GM12878 (cell line): ENCODE measurements at regions of chr6 and their contacts with region 1.

Region 1: GRCh38 chr6:113642714-113643406 is 214.3 kb upstream of the MARCKS start:
- DNase-seq: no peak
- ATAC-seq: peak; percentile 81
- H3K4me3 ChIP-seq: peak overlapping the region; percentile 28; the same call in 1 of the 2 replicates
- H3K27ac ChIP-seq: peak overlapping the region; percentile 89
- H3K4me1 ChIP-seq: peaks cover 39% of the 10 kb centered on the region
- H3K27me3 ChIP-seq: no peaks in the 10 kb centered on the region
- CTCF ChIP-seq: no peak
- EP300 ChIP-seq: peak; percentile 83 to 88; a peak in 3 of 4 replicates
- POLR2A ChIP-seq: 0 out of 2 replicates have a peak, but pooled peaks have one; percentile 43
- RAD21 ChIP-seq: peak; percentile 25; the same call in 1 of the 2 replicates

Region 2: GRCh38 chr6:113584767-113585166 is 58.1 kb before region 1 on chr6:
- CTCF ChIA-PET with region 1: no interaction called
- POLR2A ChIA-PET with region 1: no interaction called
- RAD21 ChIA-PET with region 1: no interaction called
- SMC1A ChIA-PET with region 1: no interaction called
- in situ Hi-C with region 1: no loop called
- intact Hi-C with region 1: no loop called
- DNase-seq: no peak
- ATAC-seq: no peak
- H3K4me3 ChIP-seq: no peak overlapping the region
- H3K27ac ChIP-seq: no peak overlapping the region
- H3K4me1 ChIP-seq: no peaks in the 10 kb centered on the region
- H3K27me3 ChIP-seq: no peaks in the 10 kb centered on the region
- CTCF ChIP-seq: no peak
- EP300 ChIP-seq: no peak
- POLR2A ChIP-seq: no peak
- RAD21 ChIP-seq: no peak

Region 3: DNA sequence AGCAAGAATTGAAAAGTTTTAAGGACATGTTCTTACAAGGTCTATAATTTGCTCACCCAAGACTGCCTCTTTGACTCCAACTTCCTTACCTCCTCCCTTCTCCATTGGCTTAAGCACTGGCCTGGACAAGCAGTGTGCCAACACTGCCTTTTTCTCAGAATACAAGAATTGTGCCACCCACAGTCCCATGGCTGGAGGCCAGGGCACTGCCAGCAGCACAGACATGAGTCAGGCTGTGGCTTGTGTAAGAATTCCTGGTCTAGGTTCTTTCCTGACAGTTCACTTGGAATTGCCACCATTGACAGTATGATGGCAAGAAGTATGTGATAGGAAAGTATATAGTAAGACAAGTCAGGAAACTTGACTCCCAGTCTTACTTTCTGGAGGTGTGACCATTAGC is 11.5 kb after region 1 on chr6:
- CTCF ChIA-PET with region 1: interaction called, 9 read pairs
- POLR2A ChIA-PET with region 1: interaction called, 304 read pairs
- RAD21 ChIA-PET with region 1: interaction called, 39 read pairs
- SMC1A ChIA-PET with region 1: interaction called, 489 read pairs
- in situ Hi-C with region 1: no loop called
- intact Hi-C with region 1: no loop called
- DNase-seq: no peak
- ATAC-seq: no peak
- H3K4me3 ChIP-seq: no peak overlapping the region
- H3K27ac ChIP-seq: peak overlapping the region; percentile 58; the same call in 1 of the 2 replicates
- H3K4me1 ChIP-seq: peaks cover 45% of the 10 kb centered on the region
- H3K27me3 ChIP-seq: no peaks in the 10 kb centered on the region
- CTCF ChIP-seq: no peak
- EP300 ChIP-seq: no peak
- POLR2A ChIP-seq: no peak
- RAD21 ChIP-seq: no peak

Region 4: DNA sequence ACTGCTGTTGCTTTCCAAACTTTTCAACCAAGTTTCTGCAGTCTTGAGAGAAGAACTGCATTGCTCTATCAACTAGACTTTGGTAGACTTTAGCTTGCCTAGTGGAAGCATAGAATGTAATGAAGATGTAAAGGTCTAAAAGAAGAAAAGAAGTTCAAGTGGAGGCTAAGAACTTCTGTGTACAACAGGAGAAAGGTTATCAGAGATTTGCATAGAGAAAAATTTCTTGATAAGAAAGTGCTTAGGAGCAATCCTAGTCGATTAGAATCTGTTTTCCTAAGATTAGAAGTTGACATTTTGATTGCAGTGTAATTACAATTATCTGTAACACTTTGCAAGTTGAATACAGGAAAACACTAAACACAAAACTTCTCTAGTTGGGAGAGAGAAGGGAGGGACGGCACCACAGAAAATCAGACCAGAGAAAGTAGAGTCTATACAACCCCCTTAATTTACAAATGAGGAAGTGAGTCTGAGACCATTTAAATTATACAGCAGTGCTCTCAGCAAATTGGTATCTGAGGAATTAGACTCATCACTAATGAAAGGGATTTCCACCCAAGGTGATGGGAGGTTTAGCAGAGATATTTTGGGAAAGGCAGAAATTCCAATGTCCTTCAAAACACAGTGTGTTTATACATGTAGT is 20.0 kb after region 1 on chr6:
- CTCF ChIA-PET with region 1: interaction called, 6 read pairs
- POLR2A ChIA-PET with region 1: interaction called, 22 read pairs
- RAD21 ChIA-PET with region 1: interaction called, 48 read pairs
- SMC1A ChIA-PET with region 1: interaction called, 234 read pairs
- in situ Hi-C with region 1: no loop called
- intact Hi-C with region 1: loop called (anchors 2 kb)
- DNase-seq: no peak
- ATAC-seq: peak; percentile 89
- H3K4me3 ChIP-seq: no peak overlapping the region; the same call in 1 of the 2 replicates
- H3K27ac ChIP-seq: no peak overlapping the region; the same call in 1 of the 2 replicates
- H3K4me1 ChIP-seq: peaks cover 39% of the 10 kb centered on the region
- H3K27me3 ChIP-seq: no peaks in the 10 kb centered on the region
- CTCF ChIP-seq: no peak
- EP300 ChIP-seq: no peak; a peak in 1 of 4 replicates
- POLR2A ChIP-seq: no peak
- RAD21 ChIP-seq: no peak

Region 5: GRCh38 chr6:113672491-113673149 is 29.8 kb after region 1 on chr6:
- CTCF ChIA-PET with region 1: interaction called, 5 read pairs
- POLR2A ChIA-PET with region 1: interaction called, 5 read pairs
- RAD21 ChIA-PET with region 1: interaction called, 32 read pairs
- SMC1A ChIA-PET with region 1: interaction called, 234 read pairs
- in situ Hi-C with region 1: no loop called
- intact Hi-C with region 1: no loop called
- DNase-seq: no peak
- ATAC-seq: no peak
- H3K4me3 ChIP-seq: no peak overlapping the region
- H3K27ac ChIP-seq: no peak overlapping the region
- H3K4me1 ChIP-seq: peaks cover 27% of the 10 kb centered on the region
- H3K27me3 ChIP-seq: no peaks in the 10 kb centered on the region
- CTCF ChIP-seq: no peak
- EP300 ChIP-seq: no peak
- POLR2A ChIP-seq: no peak
- RAD21 ChIP-seq: no peak

Region 6: GRCh38 chr6:113755449-113756289 is 112.8 kb after region 1 on chr6:
- CTCF ChIA-PET with region 1: no interaction called
- POLR2A ChIA-PET with region 1: interaction called, 4 read pairs
- RAD21 ChIA-PET with region 1: interaction called, 7 read pairs
- SMC1A ChIA-PET with region 1: interaction called, 6 read pairs
- in situ Hi-C with region 1: no loop called
- intact Hi-C with region 1: loop called (anchors 5 kb)
- DNase-seq: peak; percentile 64
- ATAC-seq: peak; percentile 73
- H3K4me3 ChIP-seq: no peak overlapping the region; the same call in 1 of the 2 replicates
- H3K27ac ChIP-seq: peak overlapping the region; percentile 94
- H3K4me1 ChIP-seq: peaks cover 26% of the 10 kb centered on the region
- H3K27me3 ChIP-seq: no peaks in the 10 kb centered on the region
- CTCF ChIP-seq: no peak
- EP300 ChIP-seq: peak in 1 of 2 experiments; percentile 55; a peak in 1 of 4 replicates
- POLR2A ChIP-seq: no peak
- RAD21 ChIP-seq: 0 out of 2 replicates have a peak, but pooled peaks have one; percentile 1

Region 7: DNA sequence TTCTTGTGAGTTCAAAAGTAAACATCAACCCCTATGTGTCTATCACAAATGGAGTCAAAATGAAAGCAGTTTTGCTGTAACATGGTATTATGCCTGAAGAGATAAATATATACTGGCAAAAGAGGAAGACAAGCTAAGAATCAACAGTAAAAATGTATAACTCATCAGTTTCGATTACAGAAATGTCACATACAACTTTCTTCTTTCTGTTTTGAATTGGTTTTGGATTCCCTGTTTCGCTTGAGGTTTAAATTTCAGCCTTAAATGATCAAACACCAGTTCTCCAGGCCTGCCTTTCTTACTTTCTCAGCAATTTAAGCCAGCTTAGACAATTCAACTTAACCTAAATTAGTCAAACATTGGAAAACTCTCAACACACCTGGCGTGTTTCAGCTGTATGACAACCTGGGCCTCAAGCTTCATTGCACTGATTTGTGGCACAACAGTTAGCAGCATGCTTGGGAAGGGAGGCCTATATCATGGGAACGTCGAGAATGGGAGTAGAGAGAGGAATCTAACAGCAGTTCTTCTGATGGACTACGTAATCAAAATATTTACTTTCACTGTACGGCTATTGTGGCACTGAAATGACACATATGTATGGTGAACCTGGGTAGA is 162.4 kb after region 1 on chr6:
- CTCF ChIA-PET with region 1: interaction called, 3 read pairs
- POLR2A ChIA-PET with region 1: interaction called, 6 read pairs
- RAD21 ChIA-PET with region 1: interaction called, 16 read pairs
- SMC1A ChIA-PET with region 1: interaction called, 15 read pairs
- in situ Hi-C with region 1: no loop called
- intact Hi-C with region 1: loop called (anchors 5 kb)
- DNase-seq: peak; percentile 71
- ATAC-seq: peak; percentile 92
- H3K4me3 ChIP-seq: peak overlapping the region; percentile 56; the same call in 1 of the 2 replicates
- H3K27ac ChIP-seq: peak overlapping the region; percentile 71; the same call in 1 of the 2 replicates
- H3K4me1 ChIP-seq: peaks cover 29% of the 10 kb centered on the region
- H3K27me3 ChIP-seq: no peaks in the 10 kb centered on the region
- CTCF ChIP-seq: no peak
- EP300 ChIP-seq: peak; percentile 45 to 83; a peak in 3 of 4 replicates
- POLR2A ChIP-seq: no peak
- RAD21 ChIP-seq: no peak

Region 8: DNA sequence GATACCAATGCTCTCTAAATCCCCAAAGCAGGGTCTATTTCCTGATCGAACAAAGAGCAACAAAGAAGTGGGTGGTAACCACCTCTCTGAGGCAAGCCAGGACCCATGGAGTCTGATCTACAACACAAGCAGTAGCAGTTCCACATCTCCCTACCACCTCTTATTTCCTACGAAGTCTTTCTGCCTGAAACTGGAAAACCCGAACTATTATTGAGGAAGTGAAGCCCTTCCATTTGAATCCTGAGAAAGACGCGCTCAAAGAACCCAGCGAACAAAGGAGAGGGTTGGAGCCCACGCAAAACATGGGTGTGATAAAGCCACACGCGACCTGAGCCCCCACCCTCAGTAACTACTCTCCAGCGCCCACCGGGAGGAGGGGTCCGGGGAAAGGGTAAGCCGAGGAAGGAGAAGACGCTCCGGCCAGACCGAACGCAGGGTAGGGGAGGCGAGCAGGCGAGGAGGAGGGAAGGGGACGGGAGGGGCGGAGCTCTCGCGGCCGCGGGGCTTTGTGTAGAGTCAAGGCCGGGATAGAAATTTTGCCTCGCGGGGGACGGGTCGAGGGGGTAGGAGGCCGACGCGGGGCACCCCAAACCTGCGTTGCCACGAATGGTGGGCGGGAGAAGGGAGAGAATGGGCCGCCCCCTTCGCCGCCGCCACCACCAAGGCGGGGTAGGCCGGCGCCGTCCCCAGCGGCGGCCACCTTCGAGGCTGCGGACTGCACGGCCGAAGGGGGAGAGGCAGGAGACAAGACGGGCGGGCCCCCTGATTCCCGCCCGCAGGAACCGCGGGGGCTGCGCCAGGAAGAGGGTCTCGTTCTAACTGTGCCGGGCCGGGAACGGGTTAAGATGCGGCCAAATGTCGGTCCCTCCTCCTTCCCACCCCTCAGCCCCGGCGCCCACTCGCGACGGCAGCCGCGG is 327.3 kb after region 1 on chr6:
- CTCF ChIA-PET with region 1: no interaction called
- POLR2A ChIA-PET with region 1: no interaction called
- RAD21 ChIA-PET with region 1: no interaction called
- SMC1A ChIA-PET with region 1: no interaction called
- in situ Hi-C with region 1: no loop called
- intact Hi-C with region 1: loop called (anchors 10 kb)
- DNase-seq: no peak
- ATAC-seq: peak; percentile 70
- H3K4me3 ChIP-seq: peak overlapping the region; percentile 100
- H3K27ac ChIP-seq: peak overlapping the region; percentile 58
- H3K4me1 ChIP-seq: no peaks in the 10 kb centered on the region
- H3K27me3 ChIP-seq: no peaks in the 10 kb centered on the region
- CTCF ChIP-seq: no peak
- EP300 ChIP-seq: no peak
- POLR2A ChIP-seq: 0 out of 2 replicates have a peak, but pooled peaks have one; percentile 18
- RAD21 ChIP-seq: no peak